ENCODE measurements at regions of chr5 and their contacts with region 1.

Region 1: DNA sequence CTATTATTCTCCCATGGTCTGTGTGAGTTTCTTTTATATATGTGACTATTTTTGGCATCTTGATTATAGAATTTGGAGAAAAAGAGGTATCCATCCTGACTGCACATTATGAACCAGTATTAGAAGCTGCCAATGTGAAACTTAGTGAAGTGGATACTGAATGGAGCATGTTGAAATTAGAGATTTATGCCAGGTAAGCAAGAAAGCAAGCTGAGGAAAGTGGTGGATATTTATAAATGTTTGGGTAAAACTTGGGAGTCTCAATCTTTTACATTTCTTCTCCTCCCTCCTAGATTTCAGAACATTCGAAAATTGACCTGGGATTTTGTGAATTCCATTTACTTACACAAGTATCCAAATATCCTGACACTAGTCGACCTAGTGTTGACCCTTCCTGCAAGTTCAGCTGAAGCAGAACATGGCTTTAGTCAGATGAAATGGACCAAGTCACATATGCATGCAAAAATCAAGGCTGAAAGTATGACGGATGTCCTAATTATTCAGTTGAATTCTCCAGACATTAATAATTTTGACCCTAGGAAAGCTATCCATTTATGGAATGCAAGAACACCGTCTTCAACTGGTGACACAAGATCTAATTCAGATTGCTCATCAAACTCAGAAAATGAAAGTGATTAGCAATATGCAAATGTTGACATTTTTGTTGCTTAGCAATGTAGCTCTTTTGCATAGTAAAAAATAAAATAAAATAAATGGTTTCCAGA is 66.8 kb upstream of the IL7R start:
- DNase-seq: no peak
- H3K4me3 Mint-ChIP-seq: peak overlapping the region; percentile 30
- H3K27ac Mint-ChIP-seq: peak overlapping the region; percentile 72
- H3K4me1 Mint-ChIP-seq: peaks cover 88% of the 10 kb centered on the region
- H3K27me3 Mint-ChIP-seq: no peaks in the 10 kb centered on the region

Region 2: GRCh38 chr5:35436410-35437057 is 353.4 kb before region 1 on chr5:
- CTCF ChIA-PET with region 1: no interaction called
- POLR2A ChIA-PET with region 1: no interaction called
- DNase-seq: peak; percentile 29
- H3K4me3 Mint-ChIP-seq: no peak overlapping the region
- H3K27ac Mint-ChIP-seq: no peak overlapping the region
- H3K4me1 Mint-ChIP-seq: no peaks in the 10 kb centered on the region
- H3K27me3 Mint-ChIP-seq: peaks cover 42% of the 10 kb centered on the region

Region 3: GRCh38 chr5:35777358-35778087 is 12.4 kb before region 1 on chr5:
- CTCF ChIA-PET with region 1: interaction called, 24 read pairs
- POLR2A ChIA-PET with region 1: no interaction called
- DNase-seq: peak; percentile 86
- H3K4me3 Mint-ChIP-seq: peak overlapping the region; percentile 44
- H3K27ac Mint-ChIP-seq: peak overlapping the region; percentile 85
- H3K4me1 Mint-ChIP-seq: peaks cover 73% of the 10 kb centered on the region
- H3K27me3 Mint-ChIP-seq: no peaks in the 10 kb centered on the region

Region 4: GRCh38 chr5:35803191-35803651 is 13.3 kb after region 1 on chr5:
- CTCF ChIA-PET with region 1: interaction called, 10 read pairs
- POLR2A ChIA-PET with region 1: no interaction called
- DNase-seq: no peak
- H3K4me3 Mint-ChIP-seq: no peak overlapping the region
- H3K27ac Mint-ChIP-seq: peak overlapping the region; percentile 61
- H3K4me1 Mint-ChIP-seq: peaks cover 70% of the 10 kb centered on the region
- H3K27me3 Mint-ChIP-seq: no peaks in the 10 kb centered on the region

Region 5: DNA sequence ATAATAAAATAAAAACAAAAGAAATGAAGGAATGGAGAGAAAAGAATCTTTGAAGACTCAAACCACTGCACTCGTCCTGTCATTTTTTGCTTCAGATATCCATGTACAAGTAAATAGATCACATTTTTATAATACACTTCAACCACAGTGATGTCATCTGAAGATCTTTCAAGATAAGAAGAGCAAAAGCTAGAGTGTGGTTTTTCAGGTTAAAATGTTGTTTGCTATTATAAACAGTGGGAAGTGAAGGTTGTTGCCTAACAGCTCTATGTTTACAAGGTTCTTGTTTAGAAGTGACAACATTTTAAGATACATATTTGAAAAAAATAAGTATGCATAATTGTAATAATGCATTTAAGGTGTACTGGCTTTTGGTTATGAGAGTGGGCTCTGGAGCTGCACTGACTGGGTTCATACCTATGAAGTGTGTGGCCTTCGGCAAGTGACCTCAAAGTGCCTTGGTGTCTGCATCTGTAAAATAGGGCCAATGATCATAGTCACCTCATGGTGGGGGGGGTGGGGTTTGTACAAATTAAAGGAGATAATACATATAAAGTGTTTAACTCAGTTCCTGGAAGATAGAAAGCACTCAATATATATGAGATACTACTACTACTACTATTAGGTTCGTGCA is 21.3 kb after region 1 on chr5:
- CTCF ChIA-PET with region 1: interaction called, 12 read pairs
- POLR2A ChIA-PET with region 1: interaction called, 3 read pairs
- DNase-seq: peak; percentile 62
- H3K4me3 Mint-ChIP-seq: peak overlapping the region; percentile 57
- H3K27ac Mint-ChIP-seq: peak overlapping the region; percentile 94
- H3K4me1 Mint-ChIP-seq: peaks cover 69% of the 10 kb centered on the region
- H3K27me3 Mint-ChIP-seq: no peaks in the 10 kb centered on the region

Measured in activated CD4-positive, alpha-beta T cell treated with anti-CD3 and anti-CD28 coated beads, Interleukin-2, amount 10 ng/mL, durations not matched to agents 7 days and 5 days (primary cell).